ENCODE measurements at regions of chr19 and their contacts with region 1.

Region 1: DNA sequence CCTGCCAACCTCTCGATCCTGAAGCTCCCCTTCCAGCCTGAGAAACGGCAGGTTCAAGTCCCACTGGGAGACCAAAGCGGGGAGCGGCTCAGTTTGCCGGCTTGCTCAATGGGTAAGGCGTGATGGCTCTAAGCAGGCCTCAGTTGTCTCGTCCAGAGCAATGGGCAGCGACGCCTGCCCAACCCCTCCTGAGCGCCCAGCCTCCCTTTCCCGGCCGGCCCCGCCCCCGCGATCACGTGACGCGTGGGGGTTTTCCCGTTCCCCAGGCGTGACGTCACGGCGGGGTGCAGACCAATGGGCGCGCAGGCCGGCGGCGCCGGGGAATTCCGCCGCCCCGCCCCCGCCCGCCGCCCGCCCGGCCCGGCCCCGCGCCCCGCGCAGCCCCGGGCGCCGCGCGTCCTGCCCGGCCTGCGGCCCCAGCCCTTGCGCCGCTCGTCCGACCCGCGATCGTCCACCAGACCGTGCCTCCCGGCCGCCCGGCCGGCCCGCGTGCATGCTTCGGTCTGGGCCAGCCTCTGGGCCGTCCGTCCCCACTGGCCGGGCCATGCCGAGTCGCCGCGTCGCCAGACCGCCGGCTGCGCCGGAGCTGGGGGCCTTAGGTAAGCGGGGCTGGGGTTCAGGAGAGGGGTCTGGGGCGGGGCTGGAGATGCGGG is at the start of gene RELB:
- DNase-seq: peak; percentile 93
- H3K4me3 ChIP-seq: peak within 1 kb of the TSS; percentile 79
- H3K27ac ChIP-seq: peak within 1 kb of the TSS; percentile 89
- H3K4me1 ChIP-seq: peaks cover 6% of the 10 kb centered on the region
- H3K27me3 ChIP-seq: no peaks in the 10 kb centered on the region
- CTCF ChIP-seq: no peak
- total RNA-seq, gene RELB: 11.9 and 13.1 TPM in 2 replicates

Region 2: DNA sequence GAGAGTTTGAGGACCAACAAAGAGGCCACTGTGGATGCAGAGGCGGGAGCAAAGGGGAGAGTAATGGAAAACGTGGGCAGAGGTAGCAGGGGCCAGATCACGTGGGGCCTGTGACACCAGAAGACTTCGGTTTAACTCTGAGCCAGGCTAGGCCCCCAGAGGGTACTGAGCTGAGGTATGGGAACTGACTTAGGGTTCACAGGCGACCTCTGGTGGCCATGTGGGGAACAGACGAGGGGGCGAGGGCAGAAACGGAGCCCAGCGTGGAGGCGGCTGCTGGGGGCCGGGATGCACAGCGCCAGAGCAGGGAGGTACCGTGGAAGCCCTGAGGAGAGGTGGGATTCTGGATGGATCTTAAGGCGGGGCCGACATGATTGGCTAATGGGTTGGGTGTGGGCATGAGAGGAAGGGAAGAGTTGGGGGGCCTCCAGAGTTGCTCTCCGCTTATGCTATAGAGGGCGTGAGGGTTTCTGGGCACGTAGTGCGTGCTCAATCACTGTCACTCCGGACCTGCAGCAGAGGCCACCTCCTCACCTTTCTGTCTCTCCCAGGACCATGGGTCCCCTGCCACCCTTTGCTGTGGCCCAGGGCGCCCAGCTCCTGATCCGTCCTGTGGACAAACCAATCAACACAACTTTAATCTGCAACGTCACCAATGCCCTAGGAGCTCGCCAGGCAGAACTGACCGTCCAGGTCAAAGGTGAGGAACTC is 343.8 kb before region 1 on chr19:
- CTCF ChIA-PET with region 1: interaction called, 14 read pairs
- POLR2A ChIA-PET with region 1: no interaction called
- intact Hi-C with region 1: no loop called
- DNase-seq: peak; percentile 85
- H3K4me3 ChIP-seq: no peak overlapping the region
- H3K27ac ChIP-seq: no peak overlapping the region
- H3K4me1 ChIP-seq: peaks cover 4% of the 10 kb centered on the region
- H3K27me3 ChIP-seq: no peaks in the 10 kb centered on the region
- CTCF ChIP-seq: peak; percentile 95

Region 3: GRCh38 chr19:44689056-44689895 is 311.9 kb before region 1 on chr19:
- CTCF ChIA-PET with region 1: interaction called, 15 read pairs
- POLR2A ChIA-PET with region 1: no interaction called
- intact Hi-C with region 1: no loop called
- DNase-seq: peak; percentile 76
- H3K4me3 ChIP-seq: peak overlapping the region; percentile 11
- H3K27ac ChIP-seq: no peak overlapping the region
- H3K4me1 ChIP-seq: no peaks in the 10 kb centered on the region
- H3K27me3 ChIP-seq: no peaks in the 10 kb centered on the region
- CTCF ChIP-seq: peak; percentile 92

Region 4: DNA sequence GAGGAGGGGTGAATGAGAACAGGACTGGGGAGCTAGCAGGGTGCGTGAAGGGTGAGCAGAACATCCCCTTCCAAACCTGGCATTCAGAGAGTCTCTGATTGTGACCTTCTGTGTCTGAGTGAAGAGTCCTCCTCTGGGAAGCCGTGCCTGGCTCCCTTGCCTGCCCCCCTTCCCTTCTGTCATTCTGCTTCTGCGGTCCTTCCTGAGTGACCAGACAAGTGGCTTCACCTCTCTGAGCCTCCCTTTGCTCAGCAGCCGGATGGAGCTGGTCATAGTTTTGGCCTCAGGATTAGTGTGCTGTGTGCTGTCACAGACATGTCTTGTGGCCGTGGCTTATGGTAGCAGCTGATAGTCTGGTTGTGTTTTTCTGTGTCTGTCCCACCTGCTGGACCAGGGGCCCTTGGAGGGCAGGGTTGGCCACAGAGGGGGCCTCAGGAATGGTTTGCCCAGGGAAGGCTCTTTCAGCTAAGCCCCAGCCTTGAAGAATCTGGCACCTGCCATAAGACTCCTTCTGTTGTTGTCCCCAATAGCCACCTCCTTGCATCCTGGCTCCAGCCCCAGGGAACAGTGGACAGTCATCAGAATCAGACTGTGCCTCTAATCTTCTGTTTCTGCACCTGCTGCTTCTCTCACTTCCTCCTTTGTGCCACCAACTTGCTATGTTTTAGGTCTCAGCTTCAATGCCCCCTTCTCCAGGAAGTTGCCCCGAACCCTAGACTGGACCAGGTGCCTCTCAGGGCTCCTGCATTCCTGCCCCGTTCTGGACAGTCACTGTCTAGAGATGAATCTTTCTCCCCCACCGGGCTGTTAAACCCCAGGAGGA is 40.1 kb before region 1 on chr19:
- CTCF ChIA-PET with region 1: interaction called, 12 read pairs
- POLR2A ChIA-PET with region 1: no interaction called
- intact Hi-C with region 1: no loop called
- DNase-seq: no peak
- H3K4me3 ChIP-seq: no peak overlapping the region
- H3K27ac ChIP-seq: no peak overlapping the region
- H3K4me1 ChIP-seq: peaks cover 5% of the 10 kb centered on the region
- H3K27me3 ChIP-seq: no peaks in the 10 kb centered on the region
- CTCF ChIP-seq: no peak

Region 5: DNA sequence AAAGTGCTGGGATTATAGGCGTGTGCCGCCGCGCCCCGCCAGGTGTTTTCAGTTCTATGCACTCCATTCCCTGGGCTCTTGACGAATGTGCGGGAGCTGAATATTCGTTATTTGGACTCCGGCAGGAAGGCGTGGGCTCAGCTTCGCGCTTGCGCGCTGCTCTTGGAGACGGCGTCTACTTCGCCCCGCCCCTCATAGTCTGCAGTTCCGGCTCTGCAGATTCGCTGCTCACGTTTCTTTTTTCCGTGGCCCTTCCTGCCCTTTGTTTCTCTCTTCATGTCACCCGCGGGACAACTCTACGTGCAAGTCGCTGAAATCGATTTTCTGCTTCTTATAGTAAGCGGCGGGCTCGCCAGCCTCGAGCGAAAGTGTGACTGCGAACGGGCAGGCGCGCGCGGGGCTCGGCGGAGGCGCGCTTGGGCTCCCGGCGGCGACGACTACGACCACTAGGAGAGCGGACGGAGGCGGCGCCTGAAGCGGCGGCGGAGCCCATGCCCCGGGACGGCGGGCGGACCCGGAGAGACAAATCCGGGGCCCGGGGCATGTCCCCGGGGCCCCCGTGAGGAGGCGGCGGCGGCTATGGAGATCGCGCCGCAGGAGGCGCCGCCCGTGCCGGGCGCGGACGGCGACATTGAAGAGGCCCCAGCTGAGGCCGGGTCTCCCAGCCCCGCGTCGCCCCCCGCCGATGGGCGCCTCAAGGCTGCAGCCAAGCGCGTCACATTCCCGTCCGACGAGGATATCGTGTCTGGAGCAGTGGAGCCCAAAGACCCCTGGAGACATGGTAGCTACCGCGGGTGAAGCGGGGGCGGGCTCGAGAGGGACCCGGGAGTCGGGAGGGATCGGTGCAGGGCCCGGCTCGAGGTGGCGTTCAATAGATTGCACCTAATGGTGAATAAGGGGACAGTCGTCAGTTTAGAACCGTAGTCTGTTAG is 91.8 kb after region 1 on chr19 and contains the start of gene PPP1R37:
- CTCF ChIA-PET with region 1: no interaction called
- POLR2A ChIA-PET with region 1: no interaction called
- intact Hi-C with region 1: loop called (anchors 5 kb)
- DNase-seq: peak; percentile 99
- H3K4me3 ChIP-seq: peak within 1 kb of the TSS; percentile 99
- H3K27ac ChIP-seq: peak within 1 kb of the TSS; percentile 99
- H3K4me1 ChIP-seq: peaks cover 20% of the 10 kb centered on the region
- H3K27me3 ChIP-seq: no peaks in the 10 kb centered on the region
- CTCF ChIP-seq: 0 out of 2 replicates have a peak, but pooled peaks have one; percentile 9
- total RNA-seq, gene PPP1R37: 33.6 and 34.0 TPM in 2 replicates

Region 6: DNA sequence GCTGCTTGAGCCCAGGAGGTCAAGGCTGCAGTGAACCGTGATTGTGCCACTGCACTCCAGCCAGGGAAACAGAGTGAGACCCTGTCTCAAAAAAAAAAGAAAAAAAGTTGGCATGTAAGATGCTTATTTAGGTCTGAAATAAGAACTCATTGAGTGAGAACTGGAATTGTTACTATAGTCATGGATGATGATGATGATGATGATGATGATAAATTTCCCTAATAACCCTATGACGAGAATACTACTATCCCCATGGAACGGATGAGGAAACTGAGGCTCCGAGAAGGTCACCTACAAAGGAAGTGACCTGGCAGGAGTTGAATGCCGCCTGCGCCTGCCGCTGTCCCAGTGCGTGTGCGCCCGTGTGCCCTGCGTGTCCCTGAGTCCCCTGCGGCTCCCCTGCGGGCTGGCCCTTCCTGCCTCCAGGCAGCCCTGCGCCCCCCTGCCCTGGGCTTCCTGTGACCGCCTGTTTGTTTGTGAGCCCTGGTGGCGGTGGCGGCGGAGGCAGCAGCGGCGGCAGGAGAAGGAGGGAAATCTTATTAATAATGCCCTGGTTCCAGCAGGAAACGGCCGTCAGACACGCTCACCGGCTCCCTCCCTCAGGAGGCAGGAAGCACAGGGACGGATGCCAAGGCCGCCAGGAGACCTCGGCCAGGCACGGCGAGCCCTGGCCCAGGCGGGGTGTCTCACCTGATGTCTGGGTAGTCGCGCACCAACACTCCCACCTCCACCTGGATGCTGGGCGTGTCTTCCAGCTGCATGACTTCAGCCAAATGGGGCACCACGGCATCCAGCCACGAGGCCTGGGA is 214.4 kb after region 1 on chr19:
- CTCF ChIA-PET with region 1: no interaction called
- POLR2A ChIA-PET with region 1: no interaction called
- intact Hi-C with region 1: no loop called
- DNase-seq: no peak
- H3K4me3 ChIP-seq: no peak overlapping the region
- H3K27ac ChIP-seq: no peak overlapping the region
- H3K4me1 ChIP-seq: no peaks in the 10 kb centered on the region
- H3K27me3 ChIP-seq: peaks cover 65% of the 10 kb centered on the region
- CTCF ChIP-seq: no peak